AG04449 (cell line): ENCODE measurements at regions of chr20 and their contacts with region 1.

Region 1: DNA sequence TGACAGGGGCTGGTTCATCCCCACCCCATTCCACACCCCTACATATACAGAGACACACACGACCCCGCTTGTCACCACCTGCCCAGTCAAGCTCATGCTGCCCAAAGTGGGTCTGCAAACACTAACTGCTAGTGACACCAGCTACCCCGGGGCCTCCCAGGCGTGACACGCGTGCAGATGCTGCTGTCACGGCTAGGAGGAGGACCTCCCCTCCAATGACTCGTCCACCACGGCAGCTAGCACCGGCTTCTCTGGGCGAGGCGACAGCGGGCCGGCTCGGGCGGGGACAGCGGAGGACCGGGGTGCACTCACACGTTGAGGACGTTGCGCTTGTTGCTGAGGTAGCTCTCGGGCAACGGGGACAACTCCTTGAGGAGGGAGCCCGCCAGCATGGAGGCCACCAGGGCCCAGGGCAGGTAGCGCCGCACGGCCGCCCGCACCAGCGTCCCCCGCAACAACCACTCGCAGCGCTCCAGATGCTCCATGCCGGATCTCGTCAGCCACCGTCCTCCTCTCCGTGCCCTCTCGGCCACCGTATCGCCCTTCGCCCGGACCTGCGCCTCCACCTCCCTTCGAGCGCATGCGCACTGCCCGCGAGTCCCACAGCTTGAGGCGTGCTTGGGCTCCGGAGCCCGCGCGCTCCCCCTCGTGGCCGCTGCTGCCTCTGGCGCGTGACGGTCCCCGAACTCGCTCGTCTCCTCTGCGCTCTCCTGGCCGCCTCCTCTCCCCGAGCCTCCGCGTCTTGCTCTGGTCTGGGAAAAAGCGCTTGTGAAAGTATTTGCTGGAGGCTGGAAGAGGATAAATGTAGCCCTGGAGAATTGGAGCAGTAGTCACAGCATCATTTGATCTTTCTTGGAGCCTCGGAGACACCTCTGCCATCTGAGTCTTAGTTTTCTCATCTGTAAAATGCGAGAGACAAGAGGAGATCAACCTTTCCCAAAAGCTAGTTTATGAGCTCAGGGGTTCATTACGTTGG is at the start of gene FITM2:
- DNase-seq: peak; percentile 71
- H3K4me3 ChIP-seq: peak within 1 kb of the TSS; percentile 94
- CTCF ChIP-seq: peak; percentile 100

Region 2: DNA sequence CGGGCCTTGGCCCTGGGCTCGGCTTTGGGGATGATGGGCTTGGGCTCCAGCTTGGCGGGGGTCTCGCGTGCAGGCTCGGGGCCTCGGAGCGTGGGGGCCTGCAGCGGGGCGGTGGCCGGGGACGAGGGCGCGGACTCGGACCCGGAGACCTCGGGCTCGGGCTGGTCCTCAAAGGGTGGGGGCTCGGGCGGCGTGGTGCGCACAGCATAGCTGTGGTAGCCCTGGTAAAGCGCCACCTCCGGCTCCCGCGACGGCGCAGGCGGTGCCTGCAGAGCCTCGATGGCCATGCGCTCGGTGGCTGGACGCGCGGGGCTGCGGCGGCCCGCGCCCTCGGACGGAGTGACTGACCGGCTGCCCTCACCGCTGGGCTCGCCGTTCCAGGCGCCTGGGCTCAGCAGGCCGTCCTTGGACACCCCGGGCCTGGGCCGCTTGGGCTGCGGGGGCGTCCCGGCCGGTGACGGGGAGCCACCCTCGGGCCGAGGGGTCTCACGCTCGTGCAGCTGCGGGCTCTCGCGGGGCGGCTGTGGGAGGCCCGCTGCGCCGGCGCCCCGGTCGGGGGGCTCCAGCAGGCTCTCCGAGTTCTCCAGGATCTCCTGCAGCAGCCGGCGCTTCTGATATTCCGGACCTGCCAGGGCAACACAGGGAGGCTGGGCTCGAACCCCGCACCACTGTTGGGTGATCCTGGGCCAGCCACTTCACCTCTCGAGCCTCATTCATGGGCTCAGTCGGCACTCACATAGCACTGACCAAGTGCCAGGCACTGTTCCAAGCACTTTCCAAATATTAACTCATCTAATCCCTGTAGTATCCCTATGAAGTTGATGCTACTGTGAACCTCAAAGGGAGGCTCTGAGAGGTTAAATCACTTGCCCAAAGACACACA is 194.9 kb before region 1 on chr20:
- CTCF ChIA-PET with region 1: interaction called, 14 read pairs
- POLR2A ChIA-PET with region 1: no interaction called
- DNase-seq: no peak
- H3K4me3 ChIP-seq: no peak overlapping the region
- CTCF ChIP-seq: no peak

Region 3: GRCh38 chr20:44217342-44218092 is 93.4 kb before region 1 on chr20:
- CTCF ChIA-PET with region 1: interaction called, 452 read pairs
- POLR2A ChIA-PET with region 1: interaction called, 5 read pairs
- DNase-seq: no peak
- H3K4me3 ChIP-seq: no peak overlapping the region
- CTCF ChIP-seq: peak; percentile 85

Region 4: DNA sequence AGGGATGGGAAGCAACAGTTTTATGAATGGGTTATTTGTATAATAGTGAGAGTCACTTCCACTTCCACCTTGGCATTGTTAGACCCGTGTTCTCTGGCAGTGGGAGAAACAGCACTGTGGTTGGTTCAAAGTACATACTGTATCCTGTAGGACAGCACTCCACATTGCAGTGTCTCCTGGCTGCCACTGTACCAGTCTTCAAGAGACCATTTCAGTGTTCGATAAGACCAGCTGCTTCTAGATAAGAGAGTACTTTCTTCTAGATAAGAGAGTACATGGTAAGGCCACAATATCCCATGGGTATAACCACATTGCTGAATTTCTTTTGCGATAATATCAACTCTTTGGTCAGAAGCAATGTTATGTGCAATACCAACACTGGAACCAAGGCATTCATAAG is 28.8 kb before region 1 on chr20:
- CTCF ChIA-PET with region 1: interaction called, 17 read pairs
- POLR2A ChIA-PET with region 1: interaction called, 3 read pairs
- DNase-seq: no peak
- H3K4me3 ChIP-seq: no peak overlapping the region
- CTCF ChIP-seq: no peak

Region 5: DNA sequence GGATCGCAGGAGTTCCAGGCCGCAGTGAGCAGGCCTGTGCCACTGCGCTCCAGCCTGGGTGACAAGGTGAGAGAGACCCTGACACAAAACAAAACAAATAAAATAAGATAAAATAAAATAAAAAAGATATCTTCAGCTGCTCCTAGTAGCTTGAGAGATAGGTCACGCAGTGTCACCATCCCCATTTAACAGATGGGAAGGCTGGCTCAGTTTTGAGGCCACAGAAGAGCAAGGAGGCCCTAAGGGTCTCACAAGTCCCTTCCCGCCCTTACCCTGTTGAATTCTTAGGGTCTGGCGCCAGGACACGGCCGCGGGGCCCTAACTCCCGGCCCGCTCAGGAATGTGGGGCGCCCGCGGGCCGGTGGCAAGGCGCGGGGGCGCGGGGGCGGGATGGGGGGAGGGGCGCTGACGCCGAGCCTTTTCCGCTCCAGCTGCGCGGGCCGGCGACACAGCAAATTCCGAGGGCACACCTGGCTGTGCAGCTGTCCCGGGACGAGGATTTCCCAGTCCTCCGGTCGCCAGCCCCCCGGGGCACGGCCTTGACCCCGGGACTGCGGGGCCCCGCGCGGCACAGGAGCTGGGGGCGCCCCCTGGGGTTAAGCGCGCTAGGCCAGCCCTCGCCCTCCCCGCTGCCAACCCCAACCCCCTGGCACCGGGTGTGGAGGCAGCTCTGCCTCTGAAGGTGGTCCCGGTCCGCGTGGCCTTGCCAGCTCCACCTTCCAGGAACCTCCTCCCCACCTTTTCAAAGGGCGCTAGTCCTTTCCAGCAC is 15.6 kb after region 1 on chr20:
- CTCF ChIA-PET with region 1: interaction called, 67 read pairs
- POLR2A ChIA-PET with region 1: interaction called, 4 read pairs
- DNase-seq: no peak
- H3K4me3 ChIP-seq: no peak overlapping the region
- CTCF ChIP-seq: no peak

Region 6: GRCh38 chr20:44361021-44361420 is 50.1 kb after region 1 on chr20:
- CTCF ChIA-PET with region 1: interaction called, 12 read pairs
- POLR2A ChIA-PET with region 1: no interaction called
- DNase-seq: no peak
- H3K4me3 ChIP-seq: no peak overlapping the region
- CTCF ChIP-seq: no peak